Activated naive CD4-positive, alpha-beta T cell treated with anti-CD3 and anti-CD28 coated beads, Interleukin-2, amount 10 ng/mL, durations not matched to agents 7 days and 5 days (primary cell): ENCODE measurements at regions of chr17 and their contacts with region 1.

Region 1: GRCh38 chr17:19447085-19447583 is 36.1 kb downstream of the RNF112 start:
- DNase-seq: peak; percentile 80
- H3K4me3 Mint-ChIP-seq: no peak overlapping the region
- H3K27ac Mint-ChIP-seq: no peak overlapping the region
- H3K4me1 Mint-ChIP-seq: peaks cover 2% of the 10 kb centered on the region
- H3K27me3 Mint-ChIP-seq: peaks cover 51% of the 10 kb centered on the region

Region 2: DNA sequence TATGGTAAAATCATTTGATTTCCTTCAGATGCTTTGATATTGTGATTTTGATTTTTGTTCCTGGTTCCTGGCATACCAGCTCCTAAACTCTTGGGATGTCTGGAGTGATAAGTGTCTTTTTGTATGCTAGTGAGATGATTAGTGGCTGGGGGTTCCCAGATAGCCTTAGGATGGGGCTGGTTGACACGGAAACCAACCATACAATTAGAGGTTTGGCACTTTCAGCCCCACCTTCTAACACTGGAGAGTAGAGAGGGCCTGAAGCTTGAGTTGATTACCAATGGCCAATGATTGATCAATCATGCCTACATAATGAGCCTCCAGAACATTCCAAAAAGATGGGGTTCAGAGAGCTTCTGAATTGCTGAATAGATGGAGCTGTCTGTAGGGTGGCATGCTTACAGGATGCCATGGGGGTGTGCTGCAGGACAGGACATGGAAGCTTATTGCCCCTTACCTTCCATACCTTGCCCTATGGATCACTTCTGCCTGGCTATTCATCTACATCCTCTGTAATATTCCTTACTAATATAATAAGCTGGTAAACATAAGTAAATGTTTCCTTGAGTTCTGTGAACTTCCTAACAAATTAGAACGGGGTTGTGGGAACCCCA is 13.3 kb before region 1 on chr17:
- CTCF ChIA-PET with region 1: interaction called, 12 read pairs
- DNase-seq: no peak
- H3K4me3 Mint-ChIP-seq: no peak overlapping the region
- H3K27ac Mint-ChIP-seq: no peak overlapping the region
- H3K4me1 Mint-ChIP-seq: no peaks in the 10 kb centered on the region
- H3K27me3 Mint-ChIP-seq: peaks cover 29% of the 10 kb centered on the region

Region 3: GRCh38 chr17:19457830-19458271 is 10.7 kb after region 1 on chr17:
- CTCF ChIA-PET with region 1: interaction called, 17 read pairs
- DNase-seq: no peak
- H3K4me3 Mint-ChIP-seq: no peak overlapping the region
- H3K27ac Mint-ChIP-seq: no peak overlapping the region
- H3K4me1 Mint-ChIP-seq: peaks cover 12% of the 10 kb centered on the region
- H3K27me3 Mint-ChIP-seq: peaks cover 32% of the 10 kb centered on the region